ENCODE measurements at regions of chr6 and their contacts with region 1.

Region 1: DNA sequence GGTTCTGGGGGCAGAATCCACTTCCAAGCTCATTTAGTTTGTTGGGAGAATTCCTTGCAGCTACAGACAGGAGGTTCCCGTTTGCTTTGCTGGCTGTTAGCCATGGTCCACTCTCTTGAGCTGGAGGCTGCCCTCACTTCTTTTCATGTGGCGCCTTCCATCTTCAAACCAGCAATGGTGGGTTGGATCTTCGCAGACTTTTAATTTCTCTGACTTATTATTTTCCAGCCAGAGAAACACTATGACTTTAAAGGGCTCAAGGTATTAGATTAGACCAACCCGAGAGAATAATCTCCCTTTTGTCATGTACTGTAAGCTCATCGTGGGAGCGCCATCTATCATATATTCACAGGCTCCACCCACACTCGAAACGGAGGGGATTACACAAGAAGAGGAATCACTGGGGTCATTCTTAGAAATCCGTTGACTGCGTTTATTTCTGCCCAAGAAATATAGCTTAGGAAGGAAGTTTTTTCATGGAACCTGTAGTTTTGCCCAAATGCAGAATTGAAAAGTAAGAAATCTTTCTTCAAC is 38.9 kb downstream of the SAMD5 start:
- DNase-seq: no peak
- ATAC-seq: peak in 2 of 4 donors; percentile 29 to 41
- H3K4me3 ChIP-seq: no peak overlapping the region
- H3K27ac ChIP-seq: peak overlapping the region in 6 of 12 donors; percentile 0 to 45 (median 29)
- H3K4me1 ChIP-seq: peaks cover 0 to 13% (median 2%) of the 10 kb centered on the region in 12 donors
- H3K27me3 ChIP-seq: no peaks in the 10 kb centered on the region
- CTCF ChIP-seq: no peak
- POLR2A ChIP-seq: no peak

Region 2: GRCh38 chr6:147604373-147604772 is 56.9 kb after region 1 on chr6:
- intact Hi-C with region 1: loop called in 1 of 10 experiments (anchors 5 kb)
- DNase-seq: no peak
- ATAC-seq: no peak
- H3K4me3 ChIP-seq: no peak overlapping the region
- H3K27ac ChIP-seq: peak overlapping the region in 9 of 12 donors; percentile 59 to 77 (median 68)
- H3K4me1 ChIP-seq: peaks cover 0 to 20% (median 1%) of the 10 kb centered on the region in 12 donors
- H3K27me3 ChIP-seq: no peaks in the 10 kb centered on the region
- CTCF ChIP-seq: no peak
- POLR2A ChIP-seq: no peak

Region 3: GRCh38 chr6:148223424-148223842 is 676.0 kb after region 1 on chr6:
- intact Hi-C with region 1: no loop called
- DNase-seq: no peak
- ATAC-seq: no peak
- H3K4me3 ChIP-seq: no peak overlapping the region
- H3K27ac ChIP-seq: peak overlapping the region in 1 of 12 donors; percentile 22
- H3K4me1 ChIP-seq: peaks cover 0 to 8% (median 0%) of the 10 kb centered on the region in 12 donors
- H3K27me3 ChIP-seq: peaks cover 0 to 5% (median 0%) of the 10 kb centered on the region in 9 donors
- CTCF ChIP-seq: no peak
- POLR2A ChIP-seq: no peak